Body of pancreas (tissue), 4 donors: ENCODE measurements at regions of chr21 and their contacts with region 1.

Region 1: GRCh38 chr21:40143822-40144525 is 276.7 kb downstream of the PCP4 start:
- DNase-seq: peak; percentile 59 to 73 (median 65)
- ATAC-seq: no peak
- H3K4me3 ChIP-seq: no peak overlapping the region
- H3K27ac ChIP-seq: no peak overlapping the region
- H3K4me1 ChIP-seq: no peaks in the 10 kb centered on the region
- H3K27me3 ChIP-seq: no peaks in the 10 kb centered on the region
- CTCF ChIP-seq: peak; percentile 69 to 86 (median 77)
- POLR2A ChIP-seq: no peak

Region 2: GRCh38 chr21:40049394-40050290 is 94.3 kb before region 1 on chr21:
- intact Hi-C with region 1: no loop called
- DNase-seq: peak in 1 of 4 donors; percentile 5
- ATAC-seq: no peak
- H3K4me3 ChIP-seq: no peak overlapping the region
- H3K27ac ChIP-seq: no peak overlapping the region
- H3K4me1 ChIP-seq: peaks cover 8% of the 10 kb centered on the region
- H3K27me3 ChIP-seq: no peaks in the 10 kb centered on the region
- CTCF ChIP-seq: no peak
- POLR2A ChIP-seq: no peak

Region 3: GRCh38 chr21:40385892-40386599 is 242.1 kb after region 1 on chr21:
- intact Hi-C with region 1: loop called (anchors 5 kb)
- DNase-seq: peak; percentile 65 to 79 (median 66)
- ATAC-seq: peak; percentile 71
- H3K4me3 ChIP-seq: no peak overlapping the region
- H3K27ac ChIP-seq: no peak overlapping the region
- H3K4me1 ChIP-seq: peaks cover 7% of the 10 kb centered on the region
- H3K27me3 ChIP-seq: no peaks in the 10 kb centered on the region
- CTCF ChIP-seq: peak; percentile 65 to 91 (median 83)
- POLR2A ChIP-seq: no peak